ENCODE measurements at regions of chrX and their contacts with region 1.

Region 1: GRCh38 chrX:136268051-136269048 is 17.1 kb upstream of the MAP7D3 start:
- DNase-seq: peak in 1 of 3 donors; percentile 67
- ATAC-seq: peak; percentile 58
- H3K4me3 ChIP-seq: no peak overlapping the region
- H3K4me1 ChIP-seq: no peaks in the 10 kb centered on the region
- CTCF ChIP-seq: peak; percentile 36

Region 2: DNA sequence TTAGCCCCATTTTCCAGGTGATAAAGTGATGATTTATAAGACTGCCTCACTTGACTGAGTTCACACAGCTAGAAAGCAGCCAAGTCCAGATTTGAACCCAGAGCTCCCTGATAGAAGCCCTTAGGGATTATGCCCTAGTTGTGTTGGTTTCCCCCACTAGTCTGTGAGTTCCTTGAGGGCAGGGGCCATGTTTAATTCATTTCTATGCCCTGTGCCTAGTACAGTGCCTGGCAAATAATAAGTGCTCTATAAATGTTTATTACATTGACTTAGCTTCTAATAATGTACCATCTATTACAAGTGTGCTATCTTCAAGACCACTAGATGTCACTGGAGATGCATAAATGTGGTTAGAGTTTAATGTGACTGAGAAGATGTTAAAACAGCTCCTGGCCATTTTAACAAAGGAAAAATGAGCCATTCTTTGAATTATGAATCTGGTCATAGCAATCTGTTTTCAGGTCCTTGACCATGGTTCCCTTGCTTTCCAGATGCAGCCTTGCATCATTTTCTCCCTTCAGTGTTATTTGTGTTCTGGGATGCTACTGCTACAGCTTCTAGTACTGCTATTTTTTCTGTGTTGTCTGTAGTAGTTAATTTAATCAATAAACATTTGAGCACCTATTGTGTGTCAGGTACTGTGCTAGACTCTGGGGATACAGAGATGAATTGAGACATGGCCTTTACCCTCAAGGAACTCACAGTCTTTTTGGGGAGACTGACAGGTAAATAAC is 239.9 kb before region 1 on chrX:
- intact Hi-C with region 1: loop called in 1 of 2 experiments (anchors 5 kb)
- DNase-seq: peak in 1 of 3 donors; percentile 7
- ATAC-seq: peak; percentile 53
- H3K4me3 ChIP-seq: no peak overlapping the region
- H3K4me1 ChIP-seq: no peaks in the 10 kb centered on the region
- CTCF ChIP-seq: peak; percentile 8